Breast epithelium (tissue), 4 donors: ENCODE measurements at regions of chr13 and their contacts with region 1.

Region 1: DNA sequence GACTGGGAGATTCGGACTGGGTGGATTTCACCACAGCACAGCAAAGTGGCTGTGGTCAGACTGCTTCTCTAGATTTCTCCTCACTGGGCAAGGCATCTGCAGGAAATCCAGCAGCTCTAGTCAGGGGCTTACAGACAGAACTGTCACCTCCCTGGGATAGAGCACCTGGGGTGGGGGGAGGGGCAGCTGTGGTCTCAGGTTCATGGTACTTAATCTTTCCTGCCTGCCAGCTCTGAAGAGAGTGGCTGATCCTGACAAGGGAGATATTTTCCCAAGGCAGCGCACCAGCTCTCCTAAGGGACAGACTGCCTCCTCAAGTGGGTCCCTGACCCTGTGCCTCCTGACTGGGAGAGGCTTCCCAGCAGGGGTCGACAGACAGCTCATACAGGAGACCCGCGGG is 212.8 kb upstream of the KLF12 start:
- DNase-seq: no peak
- H3K4me3 ChIP-seq: no peak overlapping the region
- H3K27ac ChIP-seq: no peak overlapping the region
- H3K4me1 ChIP-seq: no peaks in the 10 kb centered on the region
- H3K27me3 ChIP-seq: no peaks in the 10 kb centered on the region
- CTCF ChIP-seq: no peak
- POLR2A ChIP-seq: no peak

Region 2: DNA sequence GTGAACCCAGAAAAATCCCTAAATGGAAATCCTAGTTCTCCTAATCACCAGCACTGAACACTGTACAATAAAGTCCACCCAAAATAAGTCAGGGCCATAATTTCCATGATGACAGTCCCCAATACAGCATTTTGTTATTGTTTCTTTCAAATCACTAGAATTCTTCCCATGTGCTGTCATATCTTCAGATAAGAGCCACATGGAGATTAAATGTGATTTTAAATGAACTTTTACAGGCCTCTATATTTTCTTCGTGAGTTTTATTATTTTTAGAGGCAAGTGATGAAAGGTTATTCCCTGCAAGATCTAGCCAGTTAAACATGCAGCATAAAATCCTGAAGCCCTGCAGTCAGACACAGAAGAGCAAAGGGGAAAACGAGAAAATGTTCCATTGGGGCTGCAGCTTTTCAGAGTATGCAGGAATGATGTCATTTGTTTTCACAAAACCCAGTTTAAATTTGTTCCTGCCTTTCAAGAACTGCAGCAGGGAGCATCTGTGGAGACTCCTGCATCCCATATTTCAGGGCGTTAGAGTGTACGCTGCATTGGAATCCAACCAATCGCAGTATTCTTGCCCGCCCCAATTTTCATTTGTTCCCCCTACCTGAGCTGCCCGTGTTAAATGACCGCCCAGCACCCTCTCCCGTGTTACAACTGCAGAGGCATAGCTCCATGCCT is 45.6 kb before region 1 on chr13:
- intact Hi-C with region 1: no loop called
- DNase-seq: no peak
- H3K4me3 ChIP-seq: no peak overlapping the region
- H3K27ac ChIP-seq: no peak overlapping the region
- H3K4me1 ChIP-seq: no peaks in the 10 kb centered on the region
- H3K27me3 ChIP-seq: no peaks in the 10 kb centered on the region
- CTCF ChIP-seq: no peak
- POLR2A ChIP-seq: no peak

Region 3: DNA sequence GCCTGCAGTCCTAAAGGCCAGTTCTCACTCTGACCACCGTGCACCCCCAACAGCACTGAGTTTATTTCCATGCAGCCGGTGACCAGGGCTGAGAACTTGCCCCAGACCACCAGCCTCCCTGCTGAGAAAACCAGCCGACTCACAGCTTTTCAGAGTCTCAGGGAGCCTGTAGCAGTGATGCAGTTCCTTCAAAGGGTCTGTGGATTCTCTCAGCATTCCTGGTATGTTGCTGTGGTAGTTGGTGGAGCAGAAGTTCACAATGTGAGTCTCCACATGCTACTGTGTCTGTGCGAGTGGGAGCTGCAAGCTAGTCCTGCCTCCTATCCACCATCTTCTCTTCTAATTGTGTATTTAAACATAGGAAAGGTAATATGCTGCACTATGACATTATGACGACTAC is 42.1 kb after region 1 on chr13:
- intact Hi-C with region 1: no loop called
- DNase-seq: no peak
- H3K4me3 ChIP-seq: no peak overlapping the region
- H3K27ac ChIP-seq: no peak overlapping the region
- H3K4me1 ChIP-seq: no peaks in the 10 kb centered on the region
- H3K27me3 ChIP-seq: no peaks in the 10 kb centered on the region
- CTCF ChIP-seq: no peak
- POLR2A ChIP-seq: no peak

Region 4: DNA sequence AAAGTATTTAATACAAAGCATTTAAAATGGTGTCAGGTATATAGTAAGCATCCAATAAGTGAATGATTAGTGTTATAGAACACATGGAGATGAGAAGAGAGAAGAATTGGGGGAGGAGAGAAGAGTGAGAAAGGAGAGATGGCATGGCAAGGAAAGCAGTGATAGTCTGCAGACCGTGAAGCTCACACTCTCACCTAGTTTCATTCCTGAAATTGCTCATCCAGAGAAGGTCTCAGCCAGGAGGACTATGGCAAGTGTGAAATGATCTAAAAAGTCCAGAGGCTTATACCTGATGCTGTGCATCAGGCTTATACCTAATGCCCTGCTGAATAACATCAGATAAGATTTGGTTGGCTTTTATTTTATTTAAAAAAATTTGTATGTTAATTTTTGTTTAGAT is 138.8 kb after region 1 on chr13:
- intact Hi-C with region 1: loop called (anchors 5 kb)
- DNase-seq: no peak
- H3K4me3 ChIP-seq: no peak overlapping the region
- H3K27ac ChIP-seq: no peak overlapping the region
- H3K4me1 ChIP-seq: no peaks in the 10 kb centered on the region
- H3K27me3 ChIP-seq: no peaks in the 10 kb centered on the region
- CTCF ChIP-seq: no peak
- POLR2A ChIP-seq: no peak

Region 5: DNA sequence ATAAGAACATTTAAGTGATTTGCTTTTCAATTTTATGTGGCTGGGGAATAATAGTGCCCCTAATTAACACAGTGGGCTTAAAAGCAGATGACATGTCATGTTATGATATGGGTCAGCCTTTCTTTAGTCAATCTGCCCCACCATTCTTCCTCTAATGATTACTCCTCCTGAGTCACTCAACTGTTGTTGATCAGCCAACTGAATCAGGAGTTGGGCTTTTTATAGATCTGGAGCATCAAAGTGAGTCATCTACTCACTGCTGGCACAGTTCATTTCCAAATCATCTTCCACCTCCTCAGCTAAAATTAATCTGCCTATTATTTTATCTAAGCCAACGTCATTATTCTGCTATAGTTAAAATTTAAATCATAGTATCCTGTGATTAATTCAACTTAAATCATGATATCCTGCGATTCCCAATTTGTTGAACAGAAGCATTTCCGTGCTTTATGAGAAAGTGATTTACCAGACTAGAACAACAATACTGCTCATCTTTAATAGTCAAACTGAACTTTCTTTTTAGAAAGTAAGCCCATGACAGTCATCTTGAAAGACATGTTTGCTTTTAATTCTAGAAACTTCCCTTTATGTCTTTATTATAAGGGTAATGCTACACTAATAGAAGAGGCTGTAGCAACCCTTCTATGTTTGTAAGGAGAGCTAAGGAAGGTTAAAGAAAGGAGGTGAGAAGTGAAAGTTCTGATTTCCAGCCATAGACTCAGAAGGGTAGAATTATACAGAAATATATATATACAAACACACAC is 583.6 kb after region 1 on chr13:
- intact Hi-C with region 1: no loop called
- DNase-seq: no peak
- H3K4me3 ChIP-seq: no peak overlapping the region
- H3K27ac ChIP-seq: no peak overlapping the region
- H3K4me1 ChIP-seq: no peaks in the 10 kb centered on the region
- H3K27me3 ChIP-seq: no peaks in the 10 kb centered on the region
- CTCF ChIP-seq: no peak
- POLR2A ChIP-seq: no peak